Activated T-helper 1 cell treated with anti-CD3 and anti-CD28 coated beads, Interleukin-12 subunit alpha, Interleukin-12 subunit beta, Interleukin-2, Interleukin-4 antibody, amounts not matched to agents 30 ng/mL and 10 ng/mL and 1 ng/mL, durations not matched to agents 14 hours and 24 hours and 36 hours (primary cell): ENCODE measurements at regions of chr9 and their contacts with region 1.

Region 1: DNA sequence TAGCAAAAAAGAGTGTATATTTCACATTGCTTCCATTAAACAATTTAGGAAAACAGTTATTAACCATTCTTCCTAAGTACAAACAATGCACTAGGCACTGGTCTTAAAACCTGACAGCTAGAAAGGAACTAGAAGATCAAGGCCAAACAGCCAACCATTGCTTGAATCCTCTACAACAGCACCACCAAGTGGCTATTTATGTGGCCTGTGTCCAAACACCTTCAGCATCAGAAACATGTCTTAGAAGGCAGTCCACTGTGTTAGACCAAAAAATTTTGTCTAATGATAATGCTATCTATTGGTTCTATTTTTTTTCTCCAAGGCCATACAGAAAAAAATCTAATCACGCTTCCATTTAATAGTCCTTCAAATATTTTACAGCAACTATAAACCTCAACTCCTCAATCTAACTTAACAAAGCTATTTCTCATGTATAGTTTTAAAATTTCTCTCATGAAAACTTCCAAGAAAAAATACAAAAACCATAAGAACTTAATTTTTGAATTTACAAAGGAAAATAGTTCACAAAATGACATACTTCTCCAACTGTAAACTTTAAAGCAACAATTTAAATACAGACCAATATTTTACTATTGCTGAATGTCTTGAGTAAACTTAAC is 36.1 kb downstream of the CAAP1 start:
- DNase-seq: no peak
- H3K4me3 Mint-ChIP-seq: no peak overlapping the region
- H3K27ac Mint-ChIP-seq: no peak overlapping the region
- H3K4me1 Mint-ChIP-seq: no peaks in the 10 kb centered on the region
- H3K27me3 Mint-ChIP-seq: no peaks in the 10 kb centered on the region

Region 2: GRCh38 chr9:26331223-26331622 is 525.3 kb before region 1 on chr9:
- intact Hi-C with region 1: loop called (anchors 5 kb)
- DNase-seq: no peak
- H3K4me3 Mint-ChIP-seq: no peak overlapping the region
- H3K27ac Mint-ChIP-seq: no peak overlapping the region
- H3K4me1 Mint-ChIP-seq: no peaks in the 10 kb centered on the region
- H3K27me3 Mint-ChIP-seq: no peaks in the 10 kb centered on the region

Region 3: DNA sequence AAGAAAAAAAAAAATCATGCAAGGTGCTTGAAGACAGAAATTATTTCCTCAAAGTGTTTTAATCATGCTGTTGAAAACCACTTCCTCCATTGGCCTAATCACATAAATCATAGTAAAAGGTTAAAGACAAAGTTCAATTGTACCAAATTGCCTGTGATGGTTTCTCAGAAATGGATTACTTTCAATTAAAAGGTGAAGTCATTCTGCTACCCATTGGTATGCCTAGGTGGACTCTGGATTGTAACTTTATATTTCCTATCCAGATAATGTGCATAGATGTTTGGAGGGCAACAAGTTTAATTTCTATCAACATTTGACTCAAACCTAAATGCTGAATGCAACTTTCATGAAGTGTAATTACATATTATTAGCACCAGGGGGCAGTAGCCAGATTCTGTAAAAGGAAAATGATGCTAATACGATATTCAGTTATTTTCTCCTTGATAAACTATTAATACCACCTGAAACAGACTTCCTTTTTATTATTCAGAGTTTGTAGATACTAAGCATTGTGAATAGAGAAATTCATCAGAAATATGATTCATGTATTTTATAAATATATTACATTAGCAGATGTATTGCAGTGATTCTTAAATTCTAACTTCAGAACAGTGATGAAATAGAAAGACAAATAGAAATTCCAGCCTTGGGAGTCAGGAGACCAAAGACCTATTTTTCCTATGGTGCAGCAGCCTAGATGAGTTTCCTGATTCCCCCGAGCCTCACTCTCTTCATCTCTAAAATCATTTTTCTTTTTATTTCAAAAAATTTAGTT is 112.1 kb before region 1 on chr9:
- intact Hi-C with region 1: loop called (anchors 1 kb)
- DNase-seq: no peak
- H3K4me3 Mint-ChIP-seq: no peak overlapping the region
- H3K27ac Mint-ChIP-seq: no peak overlapping the region
- H3K4me1 Mint-ChIP-seq: no peaks in the 10 kb centered on the region
- H3K27me3 Mint-ChIP-seq: no peaks in the 10 kb centered on the region